ENCODE measurements at regions of chr5 and their contacts with region 1.

Region 1: GRCh38 chr5:39164529-39165402 is 54.6 kb downstream of the FYB1 start:
- DNase-seq: peak; percentile 36
- ATAC-seq: peak; percentile 94
- H3K4me3 Mint-ChIP-seq: peak overlapping the region; percentile 51
- H3K27ac Mint-ChIP-seq: peak overlapping the region; percentile 97
- H3K4me1 Mint-ChIP-seq: peaks cover 90% of the 10 kb centered on the region
- H3K27me3 Mint-ChIP-seq: no peaks in the 10 kb centered on the region

Region 2: GRCh38 chr5:39064450-39064849 is 100.3 kb before region 1 on chr5:
- CTCF ChIA-PET with region 1: no interaction called
- POLR2A ChIA-PET with region 1: no interaction called
- intact Hi-C with region 1: no loop called
- DNase-seq: no peak
- ATAC-seq: peak; percentile 21
- H3K4me3 Mint-ChIP-seq: no peak overlapping the region
- H3K27ac Mint-ChIP-seq: no peak overlapping the region
- H3K4me1 Mint-ChIP-seq: peaks cover 62% of the 10 kb centered on the region
- H3K27me3 Mint-ChIP-seq: no peaks in the 10 kb centered on the region

Region 3: DNA sequence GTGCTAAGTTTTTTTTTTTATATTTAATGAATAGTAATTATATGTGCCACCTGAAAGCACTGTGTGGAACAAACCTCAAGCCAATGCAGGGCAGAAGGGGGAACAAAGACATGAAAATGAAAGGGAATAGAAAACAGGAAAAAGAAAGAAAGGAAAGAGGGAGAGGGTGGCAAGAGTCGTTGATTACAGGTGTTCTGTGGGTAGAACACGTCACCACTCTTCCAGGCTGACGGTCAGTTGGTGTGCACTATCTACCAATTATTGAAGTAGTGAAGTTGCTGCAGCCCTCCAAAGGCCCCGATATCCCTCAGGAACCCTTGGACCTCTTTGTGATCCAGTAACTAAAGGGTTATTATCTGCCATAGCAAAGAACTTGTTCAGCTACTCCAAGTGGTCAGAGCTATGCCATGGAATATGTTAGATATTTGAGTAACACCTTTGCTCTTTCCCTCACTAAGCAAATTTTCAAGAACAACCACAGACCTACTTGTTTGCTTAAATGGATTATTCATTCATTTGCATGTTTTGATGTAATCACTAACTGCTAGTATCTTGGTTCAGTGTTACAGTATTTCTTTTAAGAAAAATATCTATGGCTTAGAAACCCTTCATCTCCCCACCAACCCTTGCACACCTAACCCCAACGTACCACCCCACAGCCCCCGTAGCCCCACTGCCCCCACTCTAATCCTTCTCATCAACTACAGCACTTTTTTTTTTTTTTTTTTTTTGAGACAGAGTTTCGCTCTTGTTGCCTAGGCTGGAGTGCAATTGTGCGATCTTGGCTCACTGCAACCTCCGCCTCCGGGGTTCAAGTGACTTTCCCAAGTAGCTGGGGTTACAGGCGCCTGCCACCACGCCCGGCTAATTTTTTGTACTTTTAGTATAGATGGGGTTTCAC is 23.3 kb after region 1 on chr5:
- CTCF ChIA-PET with region 1: interaction called, 7 read pairs
- POLR2A ChIA-PET with region 1: interaction called, 9 read pairs
- intact Hi-C with region 1: loop called in 1 of 2 experiments (anchors 1 kb)
- DNase-seq: peak; percentile 45
- ATAC-seq: peak; percentile 38
- H3K4me3 Mint-ChIP-seq: peak overlapping the region; percentile 59
- H3K27ac Mint-ChIP-seq: peak overlapping the region; percentile 92
- H3K4me1 Mint-ChIP-seq: peaks cover 88% of the 10 kb centered on the region
- H3K27me3 Mint-ChIP-seq: no peaks in the 10 kb centered on the region

Region 4: GRCh38 chr5:39194466-39195136 is 29.8 kb after region 1 on chr5:
- CTCF ChIA-PET with region 1: interaction called, 15 read pairs
- POLR2A ChIA-PET with region 1: no interaction called
- intact Hi-C with region 1: no loop called
- DNase-seq: peak; percentile 52
- ATAC-seq: peak; percentile 24
- H3K4me3 Mint-ChIP-seq: peak overlapping the region; percentile 72
- H3K27ac Mint-ChIP-seq: peak overlapping the region; percentile 96
- H3K4me1 Mint-ChIP-seq: peaks cover 74% of the 10 kb centered on the region
- H3K27me3 Mint-ChIP-seq: no peaks in the 10 kb centered on the region

Region 5: GRCh38 chr5:39202597-39203274 is 38.0 kb after region 1 on chr5:
- CTCF ChIA-PET with region 1: interaction called, 10 read pairs
- POLR2A ChIA-PET with region 1: no interaction called
- intact Hi-C with region 1: loop called (anchors 2 to 5 kb)
- DNase-seq: peak; percentile 62
- ATAC-seq: peak; percentile 27
- H3K4me3 Mint-ChIP-seq: peak overlapping the region; percentile 81
- H3K27ac Mint-ChIP-seq: peak overlapping the region; percentile 93
- H3K4me1 Mint-ChIP-seq: peaks cover 36% of the 10 kb centered on the region
- H3K27me3 Mint-ChIP-seq: no peaks in the 10 kb centered on the region

Region 6: DNA sequence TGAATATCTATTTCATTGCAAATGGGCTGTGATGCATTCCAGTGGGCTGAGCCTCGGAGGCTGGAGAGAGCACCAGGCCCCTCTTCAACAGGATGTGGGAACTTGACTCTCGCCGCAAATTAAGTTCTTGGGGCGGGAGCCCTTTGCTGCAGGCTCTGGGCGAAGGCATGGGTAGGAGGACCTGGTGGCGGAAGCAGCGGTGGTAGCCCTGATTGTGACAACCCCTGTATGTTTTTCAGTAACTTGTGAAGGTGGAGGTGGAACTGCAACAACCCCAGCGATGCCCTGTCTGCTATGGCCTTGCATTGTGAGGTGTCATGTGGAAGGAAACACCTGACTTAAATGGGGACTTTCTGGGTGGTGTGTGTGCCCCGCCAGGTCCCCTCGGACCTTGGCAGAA is 45.2 kb after region 1 on chr5:
- CTCF ChIA-PET with region 1: interaction called, 3 read pairs
- POLR2A ChIA-PET with region 1: no interaction called
- intact Hi-C with region 1: loop called in 1 of 2 experiments (anchors 2 kb)
- DNase-seq: peak; percentile 87
- ATAC-seq: peak; percentile 59
- H3K4me3 Mint-ChIP-seq: peak overlapping the region; percentile 67
- H3K27ac Mint-ChIP-seq: peak overlapping the region; percentile 95
- H3K4me1 Mint-ChIP-seq: peaks cover 84% of the 10 kb centered on the region
- H3K27me3 Mint-ChIP-seq: no peaks in the 10 kb centered on the region